ENCODE measurements at regions of chr1 and their contacts with region 1.

Region 1: DNA sequence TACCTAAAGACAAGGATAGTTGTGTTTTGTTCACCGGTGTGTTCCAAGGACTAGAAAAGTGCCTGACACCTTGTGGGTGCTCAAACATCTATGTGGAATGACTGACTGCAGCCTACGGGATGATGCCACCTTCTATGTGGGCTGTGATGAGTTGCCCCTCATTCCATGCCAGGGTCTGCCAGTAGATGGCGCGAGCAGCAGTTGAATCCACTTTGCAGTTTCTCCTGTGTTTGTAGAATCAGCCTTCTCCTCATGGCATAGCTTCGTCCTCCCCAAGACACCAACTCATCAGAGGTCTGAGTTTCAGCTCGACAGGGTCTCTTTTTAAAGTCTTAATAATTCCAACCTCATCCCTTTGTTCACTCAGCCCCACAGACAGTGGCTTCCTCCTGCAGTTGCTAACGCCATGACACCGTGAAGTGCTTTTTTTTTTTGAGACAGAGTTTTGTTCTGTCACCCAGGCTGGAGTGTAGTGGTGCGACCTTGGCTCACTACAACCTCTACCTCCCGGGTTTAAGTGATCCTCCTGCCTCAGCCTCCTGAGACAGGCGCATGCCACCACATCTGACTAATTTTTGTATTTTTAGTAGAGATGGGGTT is 133.7 kb downstream of the CAPN8 start:
- DNase-seq: peak; percentile 85
- H3K4me3 Mint-ChIP-seq: no peak overlapping the region
- H3K27ac Mint-ChIP-seq: no peak overlapping the region
- H3K4me1 Mint-ChIP-seq: no peaks in the 10 kb centered on the region
- H3K27me3 Mint-ChIP-seq: peaks cover 58% of the 10 kb centered on the region
- CTCF ChIP-seq: peak; percentile 87

Region 2: DNA sequence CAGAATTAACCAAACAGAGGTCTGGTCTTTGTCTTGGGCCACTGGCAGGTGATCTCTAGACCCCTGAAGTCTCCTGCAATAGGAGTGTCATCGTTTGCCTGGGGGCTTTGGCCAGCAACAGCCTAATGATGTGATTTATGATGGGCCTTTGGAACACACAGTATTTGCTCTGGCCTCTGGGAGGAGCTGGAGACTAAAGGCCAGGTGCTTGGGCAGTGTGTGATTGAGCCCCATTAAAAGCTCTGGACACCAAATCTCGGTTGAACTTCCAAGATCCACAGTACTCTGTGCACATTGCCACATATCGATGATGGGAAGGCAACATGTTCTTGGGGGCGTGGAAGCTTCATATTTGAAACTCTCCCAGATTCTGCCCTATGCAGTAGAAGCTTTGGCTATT is 356.8 kb before region 1 on chr1:
- CTCF ChIA-PET with region 1: no interaction called
- intact Hi-C with region 1: loop called (anchors 1 kb)
- DNase-seq: peak; percentile 54
- H3K4me3 Mint-ChIP-seq: no peak overlapping the region
- H3K27ac Mint-ChIP-seq: no peak overlapping the region
- H3K4me1 Mint-ChIP-seq: peaks cover 38% of the 10 kb centered on the region
- H3K27me3 Mint-ChIP-seq: no peaks in the 10 kb centered on the region
- CTCF ChIP-seq: peak; percentile 47

Region 3: GRCh38 chr1:223639331-223639749 is 107.5 kb after region 1 on chr1:
- CTCF ChIA-PET with region 1: no interaction called
- intact Hi-C with region 1: no loop called
- DNase-seq: peak; percentile 62
- H3K4me3 Mint-ChIP-seq: peak overlapping the region; percentile 8
- H3K27ac Mint-ChIP-seq: peak overlapping the region; percentile 64
- H3K4me1 Mint-ChIP-seq: peaks cover 63% of the 10 kb centered on the region
- H3K27me3 Mint-ChIP-seq: no peaks in the 10 kb centered on the region
- CTCF ChIP-seq: no peak

Region 4: DNA sequence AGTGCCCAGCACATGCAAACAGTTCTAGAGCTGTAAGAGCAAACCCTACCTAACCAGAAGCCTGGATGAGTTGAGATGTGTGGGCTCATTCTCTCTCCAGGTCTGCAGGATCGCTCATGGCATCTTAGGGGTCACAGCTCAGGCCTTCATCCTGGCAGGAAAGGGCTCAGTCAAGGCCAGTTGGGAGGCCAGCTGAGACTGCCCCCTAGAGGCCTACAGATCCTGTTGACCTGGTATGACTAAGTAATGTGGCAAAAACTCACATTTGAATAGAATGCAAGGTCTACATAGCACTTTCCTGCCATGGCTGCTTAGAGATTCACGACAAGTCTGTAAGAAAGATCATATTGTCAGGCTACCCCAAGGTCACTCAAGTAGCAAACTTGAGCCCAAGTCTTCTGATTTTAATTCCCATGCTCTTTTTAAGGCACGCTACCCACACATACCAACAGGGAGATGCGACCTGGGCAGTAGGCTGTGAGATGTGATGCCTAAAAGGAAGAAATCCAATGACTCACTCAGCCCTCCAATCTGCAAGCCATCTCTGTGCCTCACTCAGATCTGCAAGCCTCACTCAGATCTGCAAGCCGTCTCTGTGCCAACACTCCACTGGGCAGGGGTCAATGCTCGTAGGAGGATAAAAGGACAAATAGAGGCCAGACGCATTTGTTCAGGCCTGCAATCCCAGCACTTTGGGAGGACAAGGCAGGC is 138.8 kb after region 1 on chr1:
- CTCF ChIA-PET with region 1: interaction called, 4 read pairs
- intact Hi-C with region 1: loop called (anchors 2 kb)
- DNase-seq: peak; percentile 70
- H3K4me3 Mint-ChIP-seq: no peak overlapping the region
- H3K27ac Mint-ChIP-seq: no peak overlapping the region
- H3K4me1 Mint-ChIP-seq: peaks cover 42% of the 10 kb centered on the region
- H3K27me3 Mint-ChIP-seq: no peaks in the 10 kb centered on the region
- CTCF ChIP-seq: peak; percentile 88

Measured in Calu3 (cell line).